Left ventricle myocardium superior (tissue), 1 donor: ENCODE measurements at regions of chr17 and their contacts with region 1.

Region 1: GRCh38 chr17:13002766-13003451 is 14.9 kb downstream of the ELAC2 start:
- DNase-seq: peak; percentile 90
- ATAC-seq: peak; percentile 92

Region 2: GRCh38 chr17:12180644-12181261 is 822.2 kb before region 1 on chr17:
- intact Hi-C with region 1: loop called (anchors 10 kb)
- DNase-seq: no peak
- ATAC-seq: peak; percentile 41

Region 3: GRCh38 chr17:13204574-13205219 is 201.8 kb after region 1 on chr17:
- intact Hi-C with region 1: no loop called
- DNase-seq: no peak
- ATAC-seq: no peak